Uterus (tissue), 4 donors: ENCODE measurements at regions of chr14 and their contacts with region 1.

Region 1: DNA sequence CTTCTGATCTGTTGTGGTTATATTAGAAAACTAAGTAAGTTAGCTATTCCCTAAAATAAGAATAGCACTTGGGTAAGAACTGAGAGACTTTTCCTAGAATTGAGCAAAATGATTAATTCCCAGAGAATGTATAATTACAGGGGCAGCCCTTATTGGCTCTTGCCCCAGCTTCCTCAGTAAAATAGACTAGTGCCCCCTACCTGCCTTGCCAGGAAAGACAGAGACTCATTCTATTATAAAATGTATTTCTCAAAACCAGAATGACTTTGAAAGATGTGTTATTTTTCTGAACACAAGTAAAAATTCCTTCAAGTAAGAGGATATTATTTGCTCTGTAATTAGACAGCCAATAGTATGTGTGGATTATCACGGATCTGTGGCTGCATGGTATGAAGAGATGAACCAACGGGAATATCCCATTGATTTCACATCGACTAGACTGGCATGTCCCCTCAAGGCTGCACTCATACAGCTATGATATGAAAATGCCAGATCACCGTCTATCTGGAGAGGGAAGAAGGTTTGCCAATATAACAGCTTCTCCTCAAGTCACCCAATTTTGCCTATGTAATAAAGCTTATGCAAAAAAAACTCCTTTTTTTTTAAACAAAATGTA is 7.4 kb upstream of the GLRX5 start:
- DNase-seq: peak; percentile 63 to 80
- H3K4me3 ChIP-seq: no peak overlapping the region
- H3K27ac ChIP-seq: peak overlapping the region; percentile 81 to 83
- H3K4me1 ChIP-seq: peaks cover 3 to 19% of the 10 kb centered on the region in 2 donors
- H3K27me3 ChIP-seq: no peaks in the 10 kb centered on the region
- CTCF ChIP-seq: peak; percentile 75 to 87 (median 79)
- POLR2A ChIP-seq: no peak

Region 2: DNA sequence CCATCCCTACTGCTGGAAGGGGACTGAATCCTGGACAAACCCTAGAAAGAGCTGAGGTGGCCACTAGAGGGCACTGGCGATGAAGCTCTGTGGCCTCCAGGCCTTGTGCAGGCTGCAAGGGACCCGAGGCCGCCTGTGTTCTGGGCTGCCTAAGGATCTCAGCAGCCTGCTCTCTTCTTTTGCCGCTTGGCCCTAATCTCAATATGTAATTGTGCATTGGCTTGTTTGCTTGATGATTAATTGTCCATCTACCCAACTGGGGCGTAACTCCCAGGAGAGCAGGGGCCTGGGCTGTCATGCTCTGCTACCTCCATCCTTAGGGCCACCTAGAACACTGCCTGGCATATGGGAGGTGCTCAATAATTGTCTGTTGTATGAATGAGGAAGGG is 84.9 kb before region 1 on chr14:
- intact Hi-C with region 1: loop called (anchors 5 kb)
- DNase-seq: peak; percentile 81 to 85
- H3K4me3 ChIP-seq: no peak overlapping the region
- H3K27ac ChIP-seq: peak overlapping the region in 1 of 2 donors; percentile 32
- H3K4me1 ChIP-seq: no peaks in the 10 kb centered on the region
- H3K27me3 ChIP-seq: no peaks in the 10 kb centered on the region
- CTCF ChIP-seq: peak; percentile 79 to 81 (median 80)
- POLR2A ChIP-seq: no peak